ENCODE measurements at regions of chr12 and their contacts with region 1.

Region 1: DNA sequence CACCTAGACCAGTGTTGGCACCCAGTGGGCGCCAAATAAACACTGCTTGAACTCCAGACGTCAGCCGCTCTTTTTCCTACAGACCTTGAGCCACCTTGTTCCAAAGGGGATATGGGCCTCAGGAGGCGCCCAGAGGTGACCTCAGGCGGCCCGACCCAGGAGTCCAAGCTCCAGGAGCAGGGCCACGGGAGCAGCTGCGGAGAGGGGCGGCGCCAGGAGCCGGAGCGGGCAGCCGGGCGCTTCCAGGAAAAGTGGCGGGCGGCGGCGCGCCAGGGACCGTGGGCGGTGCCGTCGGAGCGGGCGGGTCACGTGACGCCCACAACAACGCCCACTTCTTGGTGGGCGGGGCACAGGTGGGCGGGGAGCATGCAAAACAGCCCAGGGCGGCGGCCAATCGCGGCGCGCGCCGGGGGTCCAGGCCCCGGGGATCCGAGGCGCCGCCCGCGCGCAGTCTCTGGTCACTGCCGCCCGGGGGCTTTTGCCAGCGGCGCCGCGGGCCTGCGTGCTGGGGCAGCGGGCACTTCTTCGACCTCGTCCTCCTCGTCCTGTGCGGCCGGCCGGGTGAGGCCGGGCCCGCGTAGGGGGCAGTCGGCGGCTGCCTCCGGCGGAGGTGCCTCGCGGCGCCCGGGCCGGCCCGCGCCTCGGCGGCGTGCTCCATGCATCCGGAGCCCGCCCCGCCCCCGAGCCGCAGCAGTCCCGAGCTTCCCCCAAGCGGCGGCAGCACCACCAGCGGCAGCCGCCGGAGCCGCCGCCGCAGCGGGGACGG is at the start of gene ORAI1:
- DNase-seq: peak; percentile 96 to 98
- ATAC-seq: peak; percentile 90 to 96 (median 93)
- H3K4me3 ChIP-seq: peak within 1 kb of the TSS; percentile 57 to 97 (median 76)
- H3K27ac ChIP-seq: peak within 1 kb of the TSS; percentile 76 to 96 (median 92)
- H3K4me1 ChIP-seq: peaks cover 3 to 58% (median 46%) of the 10 kb centered on the region in 9 donors
- H3K27me3 ChIP-seq: no peaks in the 10 kb centered on the region
- CTCF ChIP-seq: peak in 6 of 9 donors; percentile 4 to 47 (median 28)
- total RNA-seq, gene ORAI1: 6.0 to 14.1 (median 8.8) TPM

Region 2: GRCh38 chr12:121499929-121500793 is 126.1 kb before region 1 on chr12:
- intact Hi-C with region 1: loop called in 4 of 10 experiments (anchors 2 to 10 kb)
- DNase-seq: peak; percentile 79 to 81
- ATAC-seq: peak; percentile 81 to 93 (median 88)
- H3K4me3 ChIP-seq: peak overlapping the region in 9 of 10 donors; percentile 10 to 45 (median 36)
- H3K27ac ChIP-seq: peak overlapping the region in 9 of 10 donors; percentile 50 to 85 (median 78)
- H3K4me1 ChIP-seq: peaks cover 0 to 28% (median 12%) of the 10 kb centered on the region in 9 donors
- H3K27me3 ChIP-seq: no peaks in the 10 kb centered on the region
- CTCF ChIP-seq: peak; percentile 96 to 99 (median 99)

Region 3: DNA sequence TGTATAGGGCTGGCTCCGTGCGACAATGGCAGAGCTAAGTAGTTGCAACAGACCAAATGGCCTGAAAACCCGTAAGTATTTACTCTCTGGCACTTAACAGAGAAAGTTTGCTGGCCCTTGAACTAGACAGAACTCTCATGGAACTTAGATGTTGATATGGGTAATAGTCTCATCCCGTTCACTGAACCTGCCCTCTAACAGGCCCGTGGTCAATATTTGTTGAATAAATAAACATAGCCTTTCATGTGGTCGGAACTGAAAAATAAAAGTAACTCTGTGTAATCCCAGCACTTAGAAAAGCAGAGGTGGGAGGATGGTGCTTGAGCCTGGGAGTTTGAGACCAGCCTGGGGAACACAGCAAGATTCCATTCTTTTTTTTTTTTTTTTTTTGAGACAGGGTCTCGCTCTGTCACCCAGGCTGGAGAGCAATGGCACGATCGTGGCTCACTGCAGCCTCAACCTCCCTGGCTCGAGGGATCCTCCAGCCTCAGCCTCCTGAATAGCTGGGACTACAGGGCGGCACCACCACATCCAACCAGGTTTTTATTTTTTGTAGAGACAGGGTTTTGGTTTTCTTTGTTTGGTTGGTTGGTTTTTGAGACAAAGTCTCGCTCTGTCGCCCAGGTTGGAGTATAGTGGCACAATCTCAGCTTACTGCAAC is 75.2 kb before region 1 on chr12:
- intact Hi-C with region 1: loop called (anchors 1 to 10 kb)
- DNase-seq: no peak
- ATAC-seq: no peak
- H3K4me3 ChIP-seq: no peak overlapping the region
- H3K27ac ChIP-seq: no peak overlapping the region
- H3K4me1 ChIP-seq: peaks cover 0 to 13% (median 0%) of the 10 kb centered on the region in 9 donors
- H3K27me3 ChIP-seq: no peaks in the 10 kb centered on the region
- CTCF ChIP-seq: no peak

Region 4: DNA sequence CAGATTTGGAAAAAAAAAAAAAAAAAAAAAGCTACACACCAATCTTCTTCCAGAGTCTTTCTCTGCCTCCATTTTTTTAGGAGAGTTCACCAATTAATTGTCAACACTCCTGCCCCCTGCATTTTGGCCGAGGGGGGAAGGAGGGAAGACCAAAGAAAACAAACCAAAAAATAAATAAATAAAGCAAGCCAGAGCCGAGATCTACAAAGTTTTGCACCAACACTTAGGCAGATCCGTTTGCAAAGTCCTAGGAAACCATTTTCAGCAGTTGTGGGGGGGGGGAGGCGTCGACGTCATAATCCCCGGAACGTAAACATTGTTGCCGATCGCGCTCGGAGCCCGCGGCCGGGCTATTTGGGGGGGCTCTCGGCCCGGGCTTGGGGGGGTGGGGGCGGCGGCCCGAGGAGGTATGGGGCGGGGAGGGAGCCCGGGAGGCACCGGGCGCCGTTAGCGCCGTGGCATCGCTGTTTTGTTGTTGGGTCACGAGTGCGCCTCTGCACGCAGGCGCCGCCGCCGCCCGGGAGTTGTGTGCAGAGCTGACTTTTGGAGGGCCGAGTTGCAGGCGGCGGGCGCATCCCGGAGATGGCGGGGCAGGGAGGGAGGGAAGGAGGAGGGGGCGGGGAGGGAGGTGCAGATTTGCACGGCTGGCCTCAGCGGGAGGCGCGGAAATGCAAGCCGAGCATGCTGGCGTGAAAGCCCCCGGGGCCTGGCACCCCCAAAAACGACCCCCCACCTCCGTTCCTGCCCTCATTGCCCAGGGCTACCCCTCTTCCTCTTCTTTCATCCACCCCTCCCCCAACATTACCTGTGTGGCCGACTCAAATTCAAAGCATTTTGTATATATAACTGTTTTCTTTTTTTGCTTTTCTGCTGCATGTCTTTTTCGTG is 46.0 kb before region 1 on chr12:
- intact Hi-C with region 1: loop called in 6 of 10 experiments (anchors 2 to 5 kb)
- DNase-seq: peak; percentile 68 to 77
- ATAC-seq: peak; percentile 57 to 76 (median 70)
- H3K4me3 ChIP-seq: peak overlapping the region; percentile 42 to 92 (median 74)
- H3K27ac ChIP-seq: peak overlapping the region; percentile 66 to 93 (median 84)
- H3K4me1 ChIP-seq: peaks cover 13 to 57% (median 48%) of the 10 kb centered on the region in 9 donors
- H3K27me3 ChIP-seq: no peaks in the 10 kb centered on the region
- CTCF ChIP-seq: no peak

Region 5: DNA sequence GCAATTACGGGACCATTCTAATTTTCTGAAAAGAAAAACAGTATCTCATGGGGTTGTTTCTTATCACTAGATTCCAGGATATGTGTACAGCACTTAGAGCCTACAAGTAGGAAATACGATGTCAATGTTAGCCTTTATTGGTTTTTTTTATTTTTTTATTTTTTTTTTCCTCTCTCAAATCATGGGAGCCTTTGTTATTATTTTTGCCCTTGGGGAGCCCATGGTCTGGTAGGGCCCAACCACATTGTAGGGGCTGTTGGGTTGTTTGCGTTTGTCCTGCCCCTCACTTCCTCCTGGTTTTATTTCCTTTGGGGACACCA is 37.3 kb after region 1 on chr12:
- intact Hi-C with region 1: loop called in 3 of 10 experiments (anchors 5 kb)
- DNase-seq: no peak
- ATAC-seq: no peak
- H3K4me3 ChIP-seq: peak overlapping the region in 1 of 10 donors; percentile 57
- H3K27ac ChIP-seq: peak overlapping the region in 1 of 10 donors; percentile 87
- H3K4me1 ChIP-seq: peaks cover 0 to 24% (median 5%) of the 10 kb centered on the region in 9 donors
- H3K27me3 ChIP-seq: no peaks in the 10 kb centered on the region
- CTCF ChIP-seq: no peak

Region 6: GRCh38 chr12:121668750-121669520 is 42.7 kb after region 1 on chr12:
- intact Hi-C with region 1: loop called in 8 of 10 experiments (anchors 5 to 10 kb)
- DNase-seq: peak in 1 of 2 donors; percentile 30
- ATAC-seq: no peak
- H3K4me3 ChIP-seq: no peak overlapping the region
- H3K27ac ChIP-seq: no peak overlapping the region
- H3K4me1 ChIP-seq: peaks cover 5 to 21% (median 14%) of the 10 kb centered on the region in 9 donors
- H3K27me3 ChIP-seq: no peaks in the 10 kb centered on the region
- CTCF ChIP-seq: peak; percentile 27 to 76 (median 61)

Region 7: GRCh38 chr12:121688966-121689365 is 62.7 kb after region 1 on chr12:
- intact Hi-C with region 1: loop called in 3 of 10 experiments (anchors 5 to 10 kb)
- DNase-seq: no peak
- ATAC-seq: no peak
- H3K4me3 ChIP-seq: no peak overlapping the region
- H3K27ac ChIP-seq: no peak overlapping the region
- H3K4me1 ChIP-seq: peaks cover 0 to 13% (median 5%) of the 10 kb centered on the region in 9 donors
- H3K27me3 ChIP-seq: no peaks in the 10 kb centered on the region
- CTCF ChIP-seq: no peak

Measured in heart right ventricle (tissue), 16 donors.